Body of pancreas (tissue), 4 donors: ENCODE measurements at regions of chr1 and their contacts with region 1.

Region 1: DNA sequence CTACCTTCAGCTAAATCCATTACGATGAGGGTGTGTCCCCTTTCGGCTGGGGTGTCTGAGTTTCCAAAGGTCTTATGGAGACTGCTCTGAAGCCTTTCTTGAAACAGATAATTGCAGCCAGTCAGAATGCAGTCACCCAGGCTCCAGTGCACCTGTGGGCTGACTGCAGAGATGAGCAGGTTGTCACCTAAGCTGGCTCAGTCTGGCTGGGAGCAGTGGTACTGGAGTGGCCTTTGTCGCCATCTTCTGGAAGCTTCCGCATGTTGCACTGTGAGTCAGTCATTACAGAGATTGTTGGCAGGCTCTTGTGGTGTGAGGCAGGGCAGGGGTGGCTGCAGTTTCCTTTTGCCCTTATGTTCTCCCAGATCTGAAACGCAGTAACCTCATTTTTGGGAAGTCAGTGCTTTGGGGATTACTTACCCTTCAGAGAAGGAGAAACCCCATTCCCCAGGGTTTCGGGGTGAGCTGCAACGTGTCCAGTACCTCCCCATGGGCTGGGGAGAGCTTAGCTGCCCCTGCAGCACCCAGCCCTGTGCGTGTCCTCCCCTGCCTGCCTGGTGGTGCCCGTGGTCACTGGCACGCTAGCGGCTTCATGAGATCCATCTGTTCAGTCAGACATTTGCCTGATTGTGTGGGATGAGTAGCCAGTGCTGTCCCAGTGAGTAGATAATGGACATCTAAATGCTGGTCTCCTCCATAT is 48.0 kb downstream of the SMYD2 start:
- DNase-seq: peak; percentile 83 to 89 (median 85)
- ATAC-seq: peak; percentile 90
- H3K4me3 ChIP-seq: no peak overlapping the region
- H3K27ac ChIP-seq: no peak overlapping the region
- H3K4me1 ChIP-seq: no peaks in the 10 kb centered on the region
- H3K27me3 ChIP-seq: no peaks in the 10 kb centered on the region
- CTCF ChIP-seq: peak; percentile 73 to 96 (median 93)
- POLR2A ChIP-seq: no peak

Region 2: GRCh38 chr1:213251972-213252371 is 1076.9 kb before region 1 on chr1:
- intact Hi-C with region 1: no loop called
- DNase-seq: no peak
- ATAC-seq: no peak
- H3K4me3 ChIP-seq: no peak overlapping the region
- H3K27ac ChIP-seq: no peak overlapping the region
- H3K4me1 ChIP-seq: peaks cover 5% of the 10 kb centered on the region
- H3K27me3 ChIP-seq: no peaks in the 10 kb centered on the region
- CTCF ChIP-seq: no peak
- POLR2A ChIP-seq: no peak

Region 3: GRCh38 chr1:214213136-214213535 is 115.8 kb before region 1 on chr1:
- intact Hi-C with region 1: loop called (anchors 5 kb)
- DNase-seq: no peak
- ATAC-seq: no peak
- H3K4me3 ChIP-seq: no peak overlapping the region
- H3K27ac ChIP-seq: no peak overlapping the region
- H3K4me1 ChIP-seq: peaks cover 31% of the 10 kb centered on the region
- H3K27me3 ChIP-seq: no peaks in the 10 kb centered on the region
- CTCF ChIP-seq: no peak
- POLR2A ChIP-seq: no peak

Region 4: GRCh38 chr1:214261206-214262123 is 67.5 kb before region 1 on chr1:
- intact Hi-C with region 1: loop called (anchors 5 kb)
- DNase-seq: peak; percentile 80 to 85 (median 82)
- ATAC-seq: peak; percentile 95
- H3K4me3 ChIP-seq: no peak overlapping the region
- H3K27ac ChIP-seq: no peak overlapping the region
- H3K4me1 ChIP-seq: peaks cover 5% of the 10 kb centered on the region
- H3K27me3 ChIP-seq: no peaks in the 10 kb centered on the region
- CTCF ChIP-seq: peak; percentile 86 to 95 (median 91)
- POLR2A ChIP-seq: no peak

Region 5: DNA sequence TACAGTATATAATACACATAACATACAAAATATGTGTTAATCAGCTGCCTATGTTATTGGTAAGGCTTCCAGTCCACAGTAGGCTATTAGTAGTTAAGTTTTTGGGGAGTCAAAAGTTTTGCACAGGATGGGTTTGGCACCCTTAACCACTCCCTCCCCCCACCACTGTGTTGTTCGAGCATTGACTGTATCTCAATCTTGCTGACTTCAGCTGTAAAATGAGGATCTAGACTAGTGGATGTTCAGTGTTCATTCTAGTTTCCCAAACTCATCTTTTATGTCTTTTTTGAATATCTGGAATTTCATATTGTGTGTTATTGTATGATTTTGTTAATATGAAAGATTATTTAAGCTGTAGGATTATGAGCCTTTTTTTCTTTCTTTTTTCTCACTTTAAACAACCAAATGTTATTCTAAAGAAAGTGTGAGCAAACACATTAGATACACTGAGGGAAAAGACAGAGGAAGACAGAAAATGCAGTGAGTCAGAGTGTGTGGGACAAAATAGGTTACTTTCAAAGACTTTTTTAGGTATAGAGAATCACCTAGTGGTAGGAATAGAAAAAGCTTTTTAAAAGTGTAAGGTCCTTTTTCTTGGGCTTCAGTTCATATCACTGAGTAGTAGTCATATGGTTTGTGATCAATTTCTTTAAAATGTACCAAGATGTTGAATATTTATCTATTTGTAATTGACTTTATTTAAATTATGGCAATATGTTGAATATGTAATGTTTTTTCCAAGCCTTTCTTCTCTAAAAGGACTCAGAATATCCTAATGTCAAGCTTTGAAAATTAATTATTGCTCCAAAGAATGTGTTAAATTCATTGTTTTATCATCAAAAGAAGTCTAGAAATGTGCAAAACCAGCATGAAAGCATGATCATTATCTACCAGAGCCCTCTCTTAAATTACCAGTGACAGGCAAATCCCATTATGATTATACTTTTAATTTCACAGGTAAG is 256.2 kb after region 1 on chr1:
- intact Hi-C with region 1: loop called (anchors 10 kb)
- DNase-seq: no peak
- ATAC-seq: peak; percentile 83
- H3K4me3 ChIP-seq: no peak overlapping the region
- H3K27ac ChIP-seq: no peak overlapping the region
- H3K4me1 ChIP-seq: no peaks in the 10 kb centered on the region
- H3K27me3 ChIP-seq: no peaks in the 10 kb centered on the region
- CTCF ChIP-seq: peak; percentile 17 to 89 (median 74)
- POLR2A ChIP-seq: no peak